Activated B cell treated with CpG ODN at 0.5 μM for 24 hours (primary cell): ENCODE measurements at regions of chr1 and their contacts with region 1.

Region 1: DNA sequence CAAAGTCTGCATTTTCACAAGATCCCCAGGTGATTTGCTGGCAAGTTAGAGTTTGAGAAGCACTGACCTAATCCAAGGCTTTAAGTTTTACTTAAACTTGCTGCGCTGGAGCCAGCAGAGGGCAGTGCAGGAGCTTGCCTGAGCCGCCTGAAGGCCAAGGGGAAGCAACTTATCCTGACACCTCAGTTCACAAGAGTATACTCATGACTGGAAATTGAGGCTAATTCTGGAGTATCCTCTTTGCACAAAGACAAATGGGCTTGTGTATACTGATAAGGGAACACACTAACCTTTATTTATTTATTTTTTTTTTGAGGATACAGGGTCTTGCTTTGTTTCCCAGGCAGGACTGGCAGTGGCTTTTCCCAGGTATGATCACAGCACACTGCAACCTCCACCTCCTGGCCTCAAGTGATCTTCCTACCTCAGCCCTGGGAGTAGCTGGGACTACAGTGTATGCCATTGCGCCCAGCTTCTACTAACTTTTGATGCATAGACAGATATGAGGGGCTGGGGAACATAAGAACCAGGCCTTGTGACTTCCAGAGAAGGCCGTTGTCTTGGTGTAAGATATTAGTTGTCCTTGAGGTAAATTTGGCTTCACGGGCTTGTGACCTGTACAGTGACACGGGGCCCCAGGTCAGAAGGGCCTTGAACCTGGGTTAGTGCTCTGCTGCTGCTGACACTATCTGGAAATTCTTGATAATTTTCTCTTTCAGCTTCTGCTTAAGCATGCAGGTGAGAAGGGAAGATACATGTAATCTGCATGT is 29.0 kb upstream of the SLAMF1 start:
- DNase-seq: peak; percentile 60
- ATAC-seq: peak; percentile 81
- H3K4me3 Mint-ChIP-seq: peak overlapping the region; percentile 44
- H3K27ac Mint-ChIP-seq: peak overlapping the region; percentile 61
- H3K4me1 Mint-ChIP-seq: peaks cover 14% of the 10 kb centered on the region
- H3K27me3 Mint-ChIP-seq: no peaks in the 10 kb centered on the region
- CTCF ChIP-seq: peak; percentile 57

Region 2: GRCh38 chr1:160618763-160619274 is 57.0 kb before region 1 on chr1:
- CTCF ChIA-PET with region 1: interaction called, 60 read pairs
- POLR2A ChIA-PET with region 1: interaction called, 60 read pairs
- intact Hi-C with region 1: loop called (anchors 1 kb)
- DNase-seq: no peak
- ATAC-seq: no peak
- H3K4me3 Mint-ChIP-seq: no peak overlapping the region
- H3K27ac Mint-ChIP-seq: peak overlapping the region; percentile 5
- H3K4me1 Mint-ChIP-seq: peaks cover 58% of the 10 kb centered on the region
- H3K27me3 Mint-ChIP-seq: no peaks in the 10 kb centered on the region
- CTCF ChIP-seq: no peak

Region 3: GRCh38 chr1:160629286-160630210 is 46.3 kb before region 1 on chr1:
- CTCF ChIA-PET with region 1: interaction called, 11 read pairs
- POLR2A ChIA-PET with region 1: interaction called, 60 read pairs
- intact Hi-C with region 1: no loop called
- DNase-seq: no peak
- ATAC-seq: peak; percentile 33
- H3K4me3 Mint-ChIP-seq: peak overlapping the region; percentile 41
- H3K27ac Mint-ChIP-seq: peak overlapping the region; percentile 74
- H3K4me1 Mint-ChIP-seq: peaks cover 96% of the 10 kb centered on the region
- H3K27me3 Mint-ChIP-seq: no peaks in the 10 kb centered on the region
- CTCF ChIP-seq: no peak

Region 4: GRCh38 chr1:160637821-160638539 is 37.8 kb before region 1 on chr1:
- CTCF ChIA-PET with region 1: interaction called, 16 read pairs
- POLR2A ChIA-PET with region 1: interaction called, 4 read pairs
- intact Hi-C with region 1: loop called (anchors 5 kb)
- DNase-seq: no peak
- ATAC-seq: peak; percentile 48
- H3K4me3 Mint-ChIP-seq: peak overlapping the region; percentile 47
- H3K27ac Mint-ChIP-seq: peak overlapping the region; percentile 82
- H3K4me1 Mint-ChIP-seq: peaks cover 89% of the 10 kb centered on the region
- H3K27me3 Mint-ChIP-seq: no peaks in the 10 kb centered on the region
- CTCF ChIP-seq: no peak

Region 5: DNA sequence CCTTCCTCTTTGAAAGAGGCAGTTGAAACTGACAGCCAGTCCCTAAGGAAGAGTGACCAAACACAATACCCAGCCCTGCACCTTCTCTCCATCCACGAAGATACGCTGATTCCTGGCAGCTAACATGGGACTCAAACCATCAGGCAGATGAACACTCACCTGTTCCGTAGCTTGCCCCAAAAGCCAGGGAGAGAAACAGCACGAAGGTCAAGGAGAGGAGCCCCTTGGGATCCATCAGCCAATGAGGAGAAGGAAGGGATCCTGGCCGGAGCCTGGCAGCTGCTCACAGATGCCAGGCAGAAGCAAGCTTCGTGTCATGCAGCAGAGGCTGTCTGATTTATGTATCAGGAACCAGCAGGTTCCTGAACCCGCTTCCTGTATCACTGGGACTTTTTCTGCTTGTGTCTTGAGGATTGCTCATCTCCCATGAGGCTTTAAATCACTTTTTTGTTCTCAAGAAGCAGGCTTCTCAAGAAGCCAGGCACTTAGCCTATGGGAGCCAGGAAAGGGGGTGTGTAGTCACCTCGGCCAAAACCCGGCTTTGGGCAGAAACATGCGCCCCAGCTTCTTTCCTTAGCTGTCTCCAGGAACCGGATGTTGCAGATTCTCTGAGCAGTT is 29.0 kb before region 1 on chr1 and contains the start of gene SLAMF1:
- CTCF ChIA-PET with region 1: interaction called, 6 read pairs
- POLR2A ChIA-PET with region 1: interaction called, 21 read pairs
- intact Hi-C with region 1: loop called (anchors 5 kb)
- DNase-seq: peak; percentile 35
- ATAC-seq: peak; percentile 84
- H3K4me3 Mint-ChIP-seq: peak within 1 kb of the TSS; percentile 95
- H3K27ac Mint-ChIP-seq: peak within 1 kb of the TSS; percentile 91
- H3K4me1 Mint-ChIP-seq: peaks cover 88% of the 10 kb centered on the region
- H3K27me3 Mint-ChIP-seq: no peaks in the 10 kb centered on the region
- CTCF ChIP-seq: no peak
- total RNA-seq, gene SLAMF1: 85.7 and 91.7 TPM in 2 replicates

Region 6: DNA sequence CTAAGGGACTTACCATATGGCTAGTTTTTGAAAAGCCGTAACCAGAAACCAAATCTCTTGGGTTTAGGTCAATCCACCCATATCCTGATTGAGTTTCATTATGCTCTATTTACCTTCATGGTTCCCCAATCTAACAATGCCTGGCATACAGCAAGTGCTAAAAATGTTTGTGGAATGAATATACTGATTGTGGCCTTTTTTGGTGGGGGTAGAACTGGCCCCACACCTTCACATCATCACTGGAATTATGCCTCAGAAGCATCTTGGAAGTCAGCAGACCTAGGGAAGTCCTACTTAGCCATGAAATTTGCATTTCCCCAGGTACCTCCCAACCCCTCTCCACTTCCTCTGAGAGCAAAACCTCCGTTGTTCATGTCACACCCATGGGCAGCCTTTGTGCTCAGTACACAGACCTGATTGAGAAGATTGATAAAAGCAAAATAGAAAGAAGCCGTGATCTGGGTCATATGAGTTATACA is 11.2 kb before region 1 on chr1:
- CTCF ChIA-PET with region 1: interaction called, 14 read pairs
- POLR2A ChIA-PET with region 1: interaction called, 14 read pairs
- intact Hi-C with region 1: loop called (anchors 1 kb)
- DNase-seq: no peak
- ATAC-seq: peak; percentile 86
- H3K4me3 Mint-ChIP-seq: peak overlapping the region; percentile 61
- H3K27ac Mint-ChIP-seq: peak overlapping the region; percentile 86
- H3K4me1 Mint-ChIP-seq: peaks cover 69% of the 10 kb centered on the region
- H3K27me3 Mint-ChIP-seq: no peaks in the 10 kb centered on the region
- CTCF ChIP-seq: no peak

Region 7: GRCh38 chr1:160951443-160952128 is 275.8 kb after region 1 on chr1:
- CTCF ChIA-PET with region 1: interaction called, 27 read pairs
- POLR2A ChIA-PET with region 1: no interaction called
- intact Hi-C with region 1: loop called (anchors 1 kb)
- DNase-seq: peak; percentile 46
- ATAC-seq: peak; percentile 89
- H3K4me3 Mint-ChIP-seq: no peak overlapping the region
- H3K27ac Mint-ChIP-seq: no peak overlapping the region
- H3K4me1 Mint-ChIP-seq: peaks cover 7% of the 10 kb centered on the region
- H3K27me3 Mint-ChIP-seq: no peaks in the 10 kb centered on the region
- CTCF ChIP-seq: no peak